CD4-positive, alpha-beta memory T cell (primary cell): ENCODE measurements at regions of chr2 and their contacts with region 1.

Region 1: GRCh38 chr2:130181325-130181879 is at the start of gene SMPD4:
- DNase-seq: peak; percentile 97 to 98 (median 98)
- H3K4me3 ChIP-seq: peak within 1 kb of the TSS; percentile 81 to 97
- H3K4me3 Mint-ChIP-seq: peak within 1 kb of the TSS; percentile 90 to 97 (median 91)
- H3K27ac ChIP-seq: peak within 1 kb of the TSS; percentile 90
- H3K27ac Mint-ChIP-seq: peak within 1 kb of the TSS; percentile 94 to 98 (median 96)
- H3K4me1 ChIP-seq: peaks cover 28% of the 10 kb centered on the region
- H3K4me1 Mint-ChIP-seq: peaks cover 11 to 47% (median 23%) of the 10 kb centered on the region in 4 donors
- H3K27me3 ChIP-seq: no peaks in the 10 kb centered on the region
- H3K27me3 Mint-ChIP-seq: no peaks in the 10 kb centered on the region
- total RNA-seq, gene SMPD4: 48.8 to 51.5 TPM

Region 2: GRCh38 chr2:130150181-130151144 is 30.9 kb before region 1 on chr2:
- CTCF ChIA-PET with region 1: no interaction called
- POLR2A ChIA-PET with region 1: no interaction called
- intact Hi-C with region 1: loop called (anchors 2 kb)
- DNase-seq: no peak
- H3K4me3 ChIP-seq: no peak overlapping the region
- H3K4me3 Mint-ChIP-seq: no peak overlapping the region
- H3K27ac ChIP-seq: no peak overlapping the region
- H3K27ac Mint-ChIP-seq: peak overlapping the region in 1 of 7 donors; percentile 66
- H3K4me1 ChIP-seq: no peaks in the 10 kb centered on the region
- H3K4me1 Mint-ChIP-seq: no peaks in the 10 kb centered on the region
- H3K27me3 ChIP-seq: no peaks in the 10 kb centered on the region
- H3K27me3 Mint-ChIP-seq: no peaks in the 10 kb centered on the region

Region 3: DNA sequence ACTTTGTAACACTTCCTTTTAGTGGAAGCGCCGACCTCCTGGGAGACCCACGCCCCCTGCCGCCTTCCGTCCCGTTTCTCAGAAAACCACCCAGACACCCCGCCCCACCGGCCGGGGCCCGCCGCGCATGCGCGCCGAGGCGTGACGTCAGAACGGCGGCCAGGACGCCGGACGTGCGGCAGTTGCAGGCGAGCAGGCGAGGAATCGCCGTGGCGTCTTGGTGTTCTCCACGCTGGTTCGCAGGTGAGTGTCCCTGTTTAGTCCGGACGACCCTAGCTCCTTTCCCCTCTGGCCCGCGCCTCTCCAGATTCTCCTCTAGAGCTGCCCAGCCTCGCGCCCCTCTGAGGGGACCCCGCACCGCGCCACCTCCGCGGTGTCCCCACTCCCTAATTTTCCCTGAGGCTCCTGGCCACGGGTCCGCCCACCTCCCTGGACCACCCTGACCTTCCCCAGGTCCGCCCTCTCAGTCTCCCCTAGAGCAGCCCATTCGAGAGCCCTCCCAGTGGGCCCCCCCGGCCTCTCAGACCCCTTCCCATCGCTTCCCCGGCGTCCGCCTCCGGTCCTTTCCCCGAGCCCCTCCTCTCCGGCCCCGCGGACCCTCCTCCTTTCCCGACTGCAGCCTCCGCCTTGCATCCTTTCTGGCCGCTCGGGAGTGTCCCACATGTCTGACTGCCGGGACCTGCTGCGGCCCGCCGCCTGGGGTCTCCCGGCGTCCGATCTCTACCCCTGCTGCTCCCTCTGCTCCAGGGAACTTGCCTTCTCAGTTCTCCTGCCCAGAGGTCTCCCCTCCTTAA is 924.0 kb after region 1 on chr2 and contains the start of gene PLEKHB2:
- CTCF ChIA-PET with region 1: no interaction called
- POLR2A ChIA-PET with region 1: no interaction called
- intact Hi-C with region 1: loop called (anchors 5 kb)
- DNase-seq: peak; percentile 89 to 97 (median 92)
- H3K4me3 ChIP-seq: peak within 1 kb of the TSS; percentile 90 to 91
- H3K4me3 Mint-ChIP-seq: peak within 1 kb of the TSS; percentile 94 to 99 (median 98)
- H3K27ac ChIP-seq: peak within 1 kb of the TSS; percentile 95
- H3K27ac Mint-ChIP-seq: peak within 1 kb of the TSS; percentile 92 to 99 (median 97)
- H3K4me1 ChIP-seq: peaks cover 45% of the 10 kb centered on the region
- H3K4me1 Mint-ChIP-seq: peaks cover 34 to 59% (median 45%) of the 10 kb centered on the region in 4 donors
- H3K27me3 ChIP-seq: no peaks in the 10 kb centered on the region
- H3K27me3 Mint-ChIP-seq: no peaks in the 10 kb centered on the region
- total RNA-seq, gene PLEKHB2: 45.5 to 48.3 TPM